ENCODE measurements at regions of chr9 and their contacts with region 1.

Region 1: DNA sequence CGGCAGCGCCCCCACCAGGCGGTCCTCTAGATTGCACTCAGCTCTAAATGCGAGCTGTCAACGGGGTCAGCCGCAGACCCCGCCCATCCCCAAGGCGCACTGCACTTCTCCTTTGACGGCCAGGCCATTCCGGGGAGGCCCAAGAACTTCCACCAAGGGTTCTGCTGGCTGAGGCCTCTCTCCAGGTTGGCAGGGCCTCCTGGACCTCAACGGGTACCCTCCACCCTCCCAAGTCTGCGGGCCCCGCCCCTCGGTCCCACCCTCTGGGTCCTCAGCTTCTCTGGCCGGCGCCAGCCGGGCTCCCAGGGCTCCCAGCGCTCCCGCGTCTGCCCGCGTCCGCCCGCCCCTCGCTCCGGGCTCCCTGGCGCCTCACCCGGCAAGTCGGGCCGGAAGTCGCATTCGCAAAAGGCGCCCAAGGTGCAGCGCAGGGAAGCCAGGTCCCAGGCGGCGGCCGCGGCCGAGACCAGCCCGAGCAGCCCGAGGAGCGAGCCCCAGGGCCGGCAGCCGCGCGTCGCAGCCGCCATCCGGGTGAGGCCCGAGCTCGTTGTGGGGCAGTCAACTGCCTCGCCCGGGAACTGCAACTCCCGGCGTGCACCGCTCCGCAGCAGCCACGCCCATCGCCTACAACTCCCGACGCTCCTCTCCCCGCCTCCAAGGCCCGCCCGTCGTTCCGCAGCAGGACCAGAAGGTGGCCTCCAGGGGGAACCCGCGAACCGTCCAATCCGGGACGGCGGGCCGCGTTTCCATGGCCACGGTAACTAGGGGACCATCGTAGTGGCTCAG is at the start of gene TOR2A:
- DNase-seq: peak; percentile 93
- ATAC-seq: peak; percentile 96
- H3K4me3 ChIP-seq: peak within 1 kb of the TSS; percentile 84
- H3K27ac ChIP-seq: peak within 1 kb of the TSS; percentile 39
- H3K4me1 ChIP-seq: peaks cover 8% of the 10 kb centered on the region
- H3K27me3 ChIP-seq: no peaks in the 10 kb centered on the region
- CTCF ChIP-seq: peak; percentile 86
- total RNA-seq, gene TOR2A: 12.2 and 14.1 TPM in 2 replicates

Region 2: DNA sequence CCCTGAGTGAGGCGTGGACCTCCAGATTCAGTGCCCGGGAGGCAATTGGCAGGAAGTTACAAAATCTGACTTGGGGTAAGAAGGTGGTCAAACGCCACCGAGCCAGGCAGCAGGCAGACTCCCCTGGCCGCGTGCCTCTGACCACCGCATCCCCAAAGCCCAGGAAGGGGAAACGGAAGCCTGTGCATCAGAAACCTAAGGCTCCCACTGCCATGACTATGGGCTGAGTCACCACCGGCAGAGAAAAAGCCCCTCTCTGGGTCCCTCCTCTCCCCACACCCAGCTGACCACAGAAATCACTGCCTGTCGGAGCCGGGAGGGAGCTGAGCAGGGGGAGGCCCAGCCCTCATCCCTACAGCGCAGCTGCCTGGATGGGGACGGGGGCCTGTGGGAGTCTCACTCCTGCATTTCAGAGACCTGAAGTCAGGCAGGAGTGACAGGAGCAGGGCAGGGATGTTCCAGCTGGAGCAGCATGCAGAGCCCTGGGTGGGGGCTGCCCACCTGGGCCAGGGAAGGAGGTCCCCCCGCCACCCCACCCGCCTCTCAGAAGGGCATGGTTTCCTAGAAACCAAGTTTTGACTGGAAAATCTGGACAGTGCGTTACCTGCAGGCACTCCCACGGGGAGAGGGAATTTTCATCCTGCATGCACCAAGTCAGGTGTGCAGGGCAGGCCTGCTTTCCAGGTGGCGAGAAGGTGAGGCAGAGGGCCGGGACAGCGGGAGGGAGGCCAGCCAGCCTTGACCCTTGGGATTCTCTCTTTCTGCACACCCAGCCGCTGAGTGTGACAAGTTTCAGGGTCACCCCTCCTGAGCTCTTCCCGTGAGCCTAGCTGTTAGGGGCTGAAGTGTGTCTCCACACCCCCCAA is 215.4 kb before region 1 on chr9:
- CTCF ChIA-PET with region 1: no interaction called
- POLR2A ChIA-PET with region 1: no interaction called
- intact Hi-C with region 1: no loop called
- DNase-seq: peak; percentile 96
- ATAC-seq: peak; percentile 82
- H3K4me3 ChIP-seq: no peak overlapping the region; the same call in 1 of the 2 replicates
- H3K27ac ChIP-seq: peak overlapping the region; percentile 89
- H3K4me1 ChIP-seq: peaks cover 45% of the 10 kb centered on the region
- H3K27me3 ChIP-seq: no peaks in the 10 kb centered on the region
- CTCF ChIP-seq: no peak

Region 3: DNA sequence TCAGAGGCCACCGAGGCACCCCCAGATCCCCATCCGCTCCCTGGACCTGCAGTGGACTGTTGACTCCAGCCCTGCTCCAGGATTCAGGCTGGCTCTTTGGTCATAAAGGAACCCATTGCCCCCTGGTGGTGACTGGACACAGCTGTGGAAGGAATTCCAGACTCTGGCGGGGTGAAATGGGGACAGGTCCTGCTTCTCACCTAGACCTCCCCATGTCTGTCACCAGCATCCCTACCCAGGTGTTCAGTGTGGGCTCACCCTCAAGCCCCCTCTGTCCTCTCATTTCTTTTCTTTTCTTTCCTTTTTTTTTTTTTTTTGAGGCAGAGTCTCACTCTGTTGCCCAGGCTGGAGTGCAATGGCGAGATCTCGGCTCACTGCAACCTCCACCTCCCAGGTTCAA is 148.4 kb before region 1 on chr9:
- CTCF ChIA-PET with region 1: interaction called, 14 read pairs
- POLR2A ChIA-PET with region 1: no interaction called
- intact Hi-C with region 1: loop called (anchors 1 kb)
- DNase-seq: peak; percentile 80
- ATAC-seq: peak; percentile 64
- H3K4me3 ChIP-seq: no peak overlapping the region
- H3K27ac ChIP-seq: no peak overlapping the region
- H3K4me1 ChIP-seq: peaks cover 11% of the 10 kb centered on the region
- H3K27me3 ChIP-seq: no peaks in the 10 kb centered on the region
- CTCF ChIP-seq: peak; percentile 79

Region 4: GRCh38 chr9:127684576-127684975 is 50.4 kb before region 1 on chr9:
- CTCF ChIA-PET with region 1: no interaction called
- POLR2A ChIA-PET with region 1: no interaction called
- intact Hi-C with region 1: no loop called
- DNase-seq: peak; percentile 33
- ATAC-seq: no peak
- H3K4me3 ChIP-seq: no peak overlapping the region
- H3K27ac ChIP-seq: no peak overlapping the region
- H3K4me1 ChIP-seq: peaks cover 7% of the 10 kb centered on the region
- H3K27me3 ChIP-seq: no peaks in the 10 kb centered on the region
- CTCF ChIP-seq: no peak

Region 5: DNA sequence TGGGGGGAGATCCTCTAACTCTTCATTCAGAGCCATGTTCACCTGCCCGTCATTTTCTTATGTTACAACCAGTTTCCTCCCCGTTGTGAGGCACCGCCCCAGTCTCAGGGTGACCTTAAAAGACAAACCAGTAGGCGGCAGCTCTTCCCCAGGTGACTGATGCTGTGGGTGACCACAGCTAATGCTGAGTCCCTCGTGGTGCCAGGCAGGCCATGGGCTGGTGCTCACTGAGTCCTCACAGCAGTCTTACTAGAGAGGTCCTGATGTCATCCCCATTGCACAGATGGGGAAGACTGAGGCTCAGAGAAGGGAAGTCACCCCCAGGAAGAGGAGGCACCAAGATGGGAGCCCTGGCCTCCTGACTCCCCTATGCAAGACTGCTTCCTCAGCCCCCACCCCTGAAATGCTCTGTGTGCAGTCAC is 27.2 kb before region 1 on chr9:
- CTCF ChIA-PET with region 1: interaction called, 4 read pairs
- POLR2A ChIA-PET with region 1: no interaction called
- intact Hi-C with region 1: loop called (anchors 1 kb)
- DNase-seq: peak; percentile 49
- ATAC-seq: peak; percentile 79
- H3K4me3 ChIP-seq: no peak overlapping the region
- H3K27ac ChIP-seq: no peak overlapping the region
- H3K4me1 ChIP-seq: no peaks in the 10 kb centered on the region
- H3K27me3 ChIP-seq: no peaks in the 10 kb centered on the region
- CTCF ChIP-seq: peak; percentile 56

Region 6: GRCh38 chr9:127770905-127771569 is 36.1 kb after region 1 on chr9:
- CTCF ChIA-PET with region 1: interaction called, 10 read pairs
- POLR2A ChIA-PET with region 1: interaction called, 3 read pairs
- intact Hi-C with region 1: no loop called
- DNase-seq: peak; percentile 92
- ATAC-seq: peak; percentile 97
- H3K4me3 ChIP-seq: peak overlapping the region; percentile 70
- H3K27ac ChIP-seq: no peak overlapping the region
- H3K4me1 ChIP-seq: peaks cover 4% of the 10 kb centered on the region; the same call in 1 of the 2 replicates
- H3K27me3 ChIP-seq: no peaks in the 10 kb centered on the region
- CTCF ChIP-seq: no peak

Region 7: DNA sequence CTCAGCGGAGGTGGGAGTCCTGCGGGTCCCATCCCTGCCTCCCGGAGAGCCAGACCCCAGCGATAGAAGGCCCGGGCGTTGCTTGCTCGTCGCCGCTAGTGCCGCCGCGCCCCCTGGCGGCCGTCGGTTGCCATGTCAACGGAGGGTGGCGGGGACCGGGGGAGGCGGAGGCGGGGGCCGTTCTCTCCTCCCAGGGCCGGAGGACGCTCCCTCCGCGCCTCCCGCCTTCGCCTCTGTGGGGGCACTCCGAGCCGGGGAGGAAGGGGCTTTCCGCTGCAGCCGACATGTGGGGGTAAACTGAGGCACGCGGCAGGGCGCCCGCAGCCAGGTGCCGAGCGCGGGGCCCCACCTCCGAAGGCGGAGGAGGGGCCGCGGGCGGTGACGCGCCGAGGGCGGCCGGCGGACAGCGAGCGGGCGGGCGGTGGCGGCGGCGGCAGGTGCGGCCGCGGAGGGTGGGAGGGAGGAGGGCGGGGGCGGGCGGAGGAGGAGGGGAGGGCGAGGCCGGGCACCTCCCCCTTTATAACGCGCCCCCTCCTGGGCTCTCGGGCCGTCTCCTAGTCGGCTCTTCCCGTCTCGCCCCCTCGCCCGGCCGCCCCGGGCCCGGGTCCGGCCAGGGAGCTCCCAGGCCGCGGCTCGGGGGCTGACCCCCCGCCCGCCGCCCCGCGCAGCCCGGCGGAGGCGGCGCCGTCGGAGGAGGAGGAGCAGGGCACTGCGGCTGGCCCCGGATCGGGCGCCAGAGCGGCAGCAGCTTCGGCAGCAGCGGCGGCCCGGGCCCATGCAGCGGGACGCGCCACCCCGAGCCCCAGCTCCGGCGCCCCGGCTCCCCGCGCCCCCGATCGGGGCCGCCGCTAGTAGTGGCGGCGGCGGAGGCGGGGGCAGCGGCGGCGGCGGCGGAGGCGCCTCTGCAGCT is 50.3 kb after region 1 on chr9:
- CTCF ChIA-PET with region 1: interaction called, 11 read pairs
- POLR2A ChIA-PET with region 1: no interaction called
- intact Hi-C with region 1: loop called (anchors 1 kb)
- DNase-seq: peak; percentile 75
- ATAC-seq: peak; percentile 64
- H3K4me3 ChIP-seq: peak overlapping the region; percentile 81
- H3K27ac ChIP-seq: no peak overlapping the region
- H3K4me1 ChIP-seq: peaks cover 10% of the 10 kb centered on the region
- H3K27me3 ChIP-seq: no peaks in the 10 kb centered on the region
- CTCF ChIP-seq: peak; percentile 69

Region 8: GRCh38 chr9:127854184-127854806 is 119.4 kb after region 1 on chr9 and contains the start of gene ENG:
- CTCF ChIA-PET with region 1: no interaction called
- POLR2A ChIA-PET with region 1: no interaction called
- intact Hi-C with region 1: no loop called
- DNase-seq: no peak
- ATAC-seq: peak; percentile 62
- H3K4me3 ChIP-seq: no peak within 1 kb of the TSS
- H3K27ac ChIP-seq: no peak within 1 kb of the TSS
- H3K4me1 ChIP-seq: no peaks in the 10 kb centered on the region
- H3K27me3 ChIP-seq: no peaks in the 10 kb centered on the region
- CTCF ChIP-seq: no peak
- total RNA-seq, gene ENG: 1.1 and 1.2 TPM in 2 replicates

Region 9: DNA sequence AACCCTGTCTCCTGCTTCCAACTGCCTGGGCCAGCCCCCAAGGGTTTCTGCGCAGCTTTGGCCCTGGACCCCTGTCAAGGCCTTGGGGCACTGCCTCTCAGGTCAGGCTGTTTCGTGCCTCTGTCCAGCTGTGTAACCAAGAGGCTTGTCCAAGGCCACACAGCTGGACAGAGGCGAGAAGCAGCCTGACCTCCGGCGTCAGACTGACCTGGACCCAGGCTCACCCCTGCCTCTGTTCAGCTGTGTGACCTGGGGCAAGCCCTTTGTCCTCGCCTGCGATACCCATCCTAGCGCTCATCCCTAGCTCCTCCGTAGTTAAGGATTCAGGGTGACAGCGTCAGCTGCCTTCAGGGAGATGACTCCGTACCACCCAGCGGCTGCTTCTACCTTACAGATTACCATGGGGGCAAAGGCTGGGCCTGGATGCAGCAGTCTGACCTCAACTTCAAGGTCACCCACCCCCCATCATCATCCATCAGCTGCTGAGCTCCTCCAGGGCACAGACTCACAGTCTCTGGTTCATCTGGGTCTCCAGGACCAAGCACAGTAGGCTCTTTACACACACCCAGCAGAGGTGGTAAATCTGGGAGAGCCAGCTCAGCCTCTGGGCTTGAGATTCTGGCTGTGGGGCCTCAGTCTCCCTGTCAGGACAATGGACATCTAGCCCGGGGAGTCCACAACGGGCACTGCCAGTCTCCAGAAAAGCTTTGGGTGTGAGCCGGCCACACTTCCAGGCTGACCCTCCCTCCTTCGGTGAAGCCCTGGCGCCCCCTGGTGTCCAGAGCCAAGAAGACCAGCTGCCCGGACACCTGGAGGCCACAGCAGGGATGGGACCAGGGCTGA is 134.6 kb after region 1 on chr9:
- CTCF ChIA-PET with region 1: interaction called, 19 read pairs
- POLR2A ChIA-PET with region 1: no interaction called
- intact Hi-C with region 1: no loop called
- DNase-seq: peak; percentile 78
- ATAC-seq: peak; percentile 85
- H3K4me3 ChIP-seq: no peak overlapping the region
- H3K27ac ChIP-seq: no peak overlapping the region
- H3K4me1 ChIP-seq: peaks cover 8% of the 10 kb centered on the region
- H3K27me3 ChIP-seq: no peaks in the 10 kb centered on the region
- CTCF ChIP-seq: peak; percentile 74

Region 10: GRCh38 chr9:127916665-127917613 is 182.0 kb after region 1 on chr9 and contains the start of gene ST6GALNAC4:
- CTCF ChIA-PET with region 1: interaction called, 9 read pairs
- POLR2A ChIA-PET with region 1: no interaction called
- intact Hi-C with region 1: loop called (anchors 2 kb)
- DNase-seq: peak; percentile 82
- ATAC-seq: peak; percentile 70
- H3K4me3 ChIP-seq: peak within 1 kb of the TSS; percentile 80
- H3K27ac ChIP-seq: no peak within 1 kb of the TSS
- H3K4me1 ChIP-seq: peaks cover 39% of the 10 kb centered on the region
- H3K27me3 ChIP-seq: no peaks in the 10 kb centered on the region
- CTCF ChIP-seq: no peak
- total RNA-seq, gene ST6GALNAC4: 26.9 and 27.8 TPM in 2 replicates

Measured in PC-3 (cell line).